Activated CD4-positive, alpha-beta memory T cell treated with anti-CD3 and anti-CD28 coated beads, Interleukin-2, amount 10 ng/mL, durations not matched to agents 7 days and 5 days (primary cell): ENCODE measurements at regions of chr18 and their contacts with region 1.

Region 1: GRCh38 chr18:8623549-8624106 is 14.4 kb downstream of the RAB12 start:
- DNase-seq: no peak
- H3K4me3 Mint-ChIP-seq: peak overlapping the region; percentile 9
- H3K27ac Mint-ChIP-seq: peak overlapping the region; percentile 67
- H3K4me1 Mint-ChIP-seq: peaks cover 33% of the 10 kb centered on the region
- H3K27me3 Mint-ChIP-seq: no peaks in the 10 kb centered on the region

Region 2: DNA sequence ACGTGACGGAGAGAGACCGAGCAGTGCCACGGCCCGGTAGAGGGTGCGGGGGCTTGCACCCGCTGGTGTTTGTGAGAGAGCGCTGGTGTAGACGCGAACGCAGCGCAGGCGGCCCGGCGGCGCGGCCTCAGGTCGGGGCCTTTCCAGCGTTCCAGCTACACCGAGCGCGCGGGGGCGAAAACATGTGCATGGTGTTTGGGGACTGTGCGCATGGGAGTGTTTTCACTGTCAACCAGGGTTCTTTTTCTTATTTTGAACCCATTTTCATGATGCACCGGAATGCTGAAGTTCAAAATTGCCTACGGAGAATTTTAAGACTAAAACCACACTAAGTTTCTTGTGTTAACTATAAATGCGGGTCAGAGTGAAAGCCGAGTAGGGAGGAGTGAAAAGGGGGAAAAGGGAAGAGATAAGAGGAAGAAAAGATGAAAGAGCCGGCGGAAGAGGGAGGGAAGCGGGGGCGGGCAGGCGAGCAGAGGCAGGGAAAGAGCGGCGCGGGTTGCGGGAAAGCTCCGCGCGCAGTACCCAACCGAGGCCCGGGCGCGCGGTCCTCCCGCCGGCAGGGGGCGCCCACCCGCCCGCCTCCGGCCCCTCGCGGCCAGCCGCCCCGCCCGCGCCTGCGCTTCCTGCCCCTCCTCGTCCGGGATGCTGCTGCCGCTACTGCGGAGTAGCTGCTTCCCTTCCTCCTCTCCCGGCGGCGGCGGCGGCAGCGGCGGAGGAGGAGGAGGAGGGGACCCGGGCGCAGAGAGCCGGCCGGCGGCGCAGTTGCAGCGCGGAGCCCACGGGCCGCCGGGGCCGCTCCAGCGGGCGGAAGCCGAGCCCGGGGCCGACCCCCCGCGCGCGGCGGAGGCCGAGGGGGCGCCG is 14.6 kb before region 1 on chr18 and contains the start of gene RAB12:
- CTCF ChIA-PET with region 1: interaction called, 12 read pairs
- POLR2A ChIA-PET with region 1: interaction called, 12 read pairs
- DNase-seq: peak; percentile 87
- H3K4me3 Mint-ChIP-seq: peak within 1 kb of the TSS; percentile 80
- H3K27ac Mint-ChIP-seq: peak within 1 kb of the TSS; percentile 70
- H3K4me1 Mint-ChIP-seq: peaks cover 43% of the 10 kb centered on the region
- H3K27me3 Mint-ChIP-seq: peaks cover 12% of the 10 kb centered on the region
- total RNA-seq, gene RAB12: 12.5 to 14.6 TPM